B cell (primary cell): ENCODE measurements at regions of chr9 and their contacts with region 1.

Region 1: DNA sequence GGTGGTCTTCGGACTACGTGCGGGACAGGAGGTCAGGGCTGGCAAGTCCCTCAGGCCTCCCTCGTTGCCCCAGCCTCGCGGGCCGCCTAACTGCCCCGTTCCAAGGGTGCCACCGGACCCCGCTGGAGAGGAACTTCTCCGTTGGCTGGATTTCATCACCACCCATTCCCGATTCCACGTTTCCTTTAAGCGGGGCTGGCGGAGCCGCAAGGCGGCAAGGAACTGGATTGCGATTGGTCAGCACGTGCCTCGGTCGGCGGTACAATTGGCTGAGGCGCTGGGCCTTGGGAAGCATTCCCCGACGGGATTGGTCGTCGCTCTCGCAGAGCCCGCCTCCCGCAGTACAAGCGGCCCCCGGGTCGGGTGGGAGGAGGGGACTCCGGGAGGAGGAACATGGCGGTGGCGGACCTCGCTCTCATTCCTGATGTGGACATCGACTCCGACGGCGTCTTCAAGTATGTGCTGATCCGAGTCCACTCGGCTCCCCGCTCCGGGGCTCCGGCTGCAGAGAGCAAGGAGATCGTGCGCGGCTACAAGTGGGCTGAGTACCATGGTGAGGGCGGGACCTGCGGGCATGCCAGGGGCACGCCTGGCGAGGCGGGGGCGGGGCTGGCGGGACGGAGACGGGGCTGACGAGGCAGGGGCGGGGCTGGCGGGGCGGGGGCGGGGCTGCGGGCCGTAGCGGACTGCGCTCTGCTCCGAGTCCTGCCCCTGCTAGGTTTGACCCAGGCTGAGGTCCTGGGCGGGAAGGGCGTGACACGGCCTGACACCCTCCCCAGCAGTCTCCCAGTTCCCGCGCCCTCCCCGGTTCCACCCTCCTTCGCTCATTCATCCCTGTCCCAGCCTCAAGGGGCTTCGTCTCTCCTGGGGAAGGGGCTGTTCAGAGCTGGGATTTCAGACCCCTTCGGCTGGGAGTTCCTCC is at the start of gene PHPT1:
- DNase-seq: peak; percentile 99
- ATAC-seq: peak; percentile 94
- H3K4me3 ChIP-seq: peak within 1 kb of the TSS; percentile 53 to 87 (median 82)
- H3K4me3 Mint-ChIP-seq: peak within 1 kb of the TSS; percentile 96
- H3K27ac ChIP-seq: peak within 1 kb of the TSS in 1 of 2 donors; percentile 55
- H3K27ac Mint-ChIP-seq: peak within 1 kb of the TSS; percentile 94
- H3K4me1 ChIP-seq: peaks cover 33 to 38% of the 10 kb centered on the region in 2 donors
- H3K4me1 Mint-ChIP-seq: peaks cover 20% of the 10 kb centered on the region
- H3K27me3 ChIP-seq: peaks cover 0 to 28% (median 9%) of the 10 kb centered on the region in 4 experiments
- H3K27me3 Mint-ChIP-seq: peaks cover 7% of the 10 kb centered on the region
- CTCF ChIP-seq: no peak
- total RNA-seq, gene PHPT1: 33.1 and 36.5 TPM in 2 replicates

Region 2: DNA sequence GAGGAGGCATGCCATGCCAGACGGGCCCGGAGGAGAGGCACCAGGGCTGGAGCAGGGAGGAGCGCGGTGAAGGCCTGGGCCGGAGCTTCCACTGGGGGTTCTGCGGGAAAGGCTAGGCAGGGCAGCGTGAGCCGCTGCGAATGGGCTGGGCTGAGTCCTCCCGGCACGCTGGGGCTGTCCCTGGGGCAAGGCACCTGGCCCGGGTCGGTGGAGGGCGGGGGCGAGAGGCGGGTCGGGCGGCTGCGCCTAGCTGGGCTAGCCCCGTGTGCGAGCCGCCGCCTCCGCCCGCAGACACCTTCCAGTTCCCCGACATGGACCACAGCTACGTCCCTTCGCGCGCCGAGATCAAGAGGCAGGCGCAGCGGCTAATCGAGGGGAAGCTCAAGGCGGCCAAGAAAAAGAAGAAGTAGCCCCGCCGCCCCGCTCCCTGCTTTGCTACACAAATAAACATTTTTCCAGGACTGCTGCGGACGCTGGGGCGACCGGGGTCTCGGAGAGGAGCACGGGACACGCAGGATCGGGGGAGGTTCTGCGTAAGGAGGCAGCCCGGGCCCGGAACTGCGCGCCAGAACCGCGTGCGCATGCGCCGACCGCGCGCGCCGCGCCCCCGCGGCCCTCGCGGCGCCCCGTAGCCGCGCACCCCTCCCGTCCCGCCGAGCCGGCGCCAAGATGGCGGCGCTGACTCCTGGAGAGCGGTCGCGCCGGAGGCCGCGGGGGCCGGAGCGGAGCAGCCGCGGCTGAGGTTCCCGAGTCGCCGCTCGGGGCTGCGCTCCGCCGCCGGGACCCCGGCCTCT is 41.8 kb before region 1 on chr9 and contains the start of gene RABL6:
- CTCF ChIA-PET with region 1: interaction called, 15 read pairs
- POLR2A ChIA-PET with region 1: no interaction called
- intact Hi-C with region 1: no loop called
- DNase-seq: peak; percentile 93
- ATAC-seq: peak; percentile 86
- H3K4me3 ChIP-seq: peak within 1 kb of the TSS; percentile 42 to 97 (median 76)
- H3K4me3 Mint-ChIP-seq: peak within 1 kb of the TSS; percentile 89
- H3K27ac ChIP-seq: peak within 1 kb of the TSS; percentile 84
- H3K27ac Mint-ChIP-seq: peak within 1 kb of the TSS; percentile 95
- H3K4me1 ChIP-seq: peaks cover 19 to 21% of the 10 kb centered on the region in 2 donors
- H3K4me1 Mint-ChIP-seq: peaks cover 31% of the 10 kb centered on the region
- H3K27me3 ChIP-seq: no peaks in the 10 kb centered on the region
- H3K27me3 Mint-ChIP-seq: no peaks in the 10 kb centered on the region
- CTCF ChIP-seq: no peak
- total RNA-seq, gene RABL6: 70.5 and 72.3 TPM in 2 replicates

Region 3: DNA sequence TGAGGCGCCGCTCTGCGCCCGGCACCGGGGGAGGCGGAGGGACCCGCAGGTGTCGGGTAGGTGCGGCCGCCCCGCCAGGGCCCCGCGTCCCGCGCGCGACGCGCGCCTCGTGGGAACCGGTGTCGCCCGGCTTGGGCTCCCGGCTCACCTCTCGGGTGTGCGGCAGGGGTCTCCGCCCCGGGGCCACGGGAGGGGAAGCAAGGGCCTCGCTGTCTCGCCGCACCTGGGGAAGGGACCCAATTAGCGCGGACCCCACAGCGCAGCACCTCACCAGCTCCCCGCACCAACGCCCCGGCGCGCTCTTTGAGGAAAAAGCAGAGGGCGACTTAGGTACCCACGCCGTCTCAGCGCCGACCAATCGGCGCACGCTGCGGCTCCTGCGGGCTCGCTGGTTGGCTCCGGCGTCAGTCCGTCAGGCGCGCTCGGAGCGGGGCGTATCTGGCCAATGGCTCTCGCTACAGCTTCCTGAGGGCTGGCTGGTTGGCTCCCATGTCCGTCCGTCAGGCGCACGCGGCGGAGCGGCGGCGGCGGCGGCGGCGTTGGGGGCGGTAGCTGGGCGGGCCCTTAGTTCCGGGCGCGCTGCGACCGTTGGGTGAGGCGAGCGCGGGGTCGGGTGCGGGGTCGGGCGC is 36.8 kb after region 1 on chr9 and contains the start of gene TRAF2:
- CTCF ChIA-PET with region 1: interaction called, 11 read pairs
- POLR2A ChIA-PET with region 1: no interaction called
- intact Hi-C with region 1: loop called (anchors 1 kb)
- DNase-seq: peak; percentile 99
- ATAC-seq: peak; percentile 91
- H3K4me3 ChIP-seq: peak within 1 kb of the TSS; percentile 30 to 91 (median 83)
- H3K4me3 Mint-ChIP-seq: peak within 1 kb of the TSS; percentile 91
- H3K27ac ChIP-seq: peak within 1 kb of the TSS; percentile 78 to 99
- H3K27ac Mint-ChIP-seq: peak within 1 kb of the TSS; percentile 87
- H3K4me1 ChIP-seq: peaks cover 28 to 36% of the 10 kb centered on the region in 2 donors
- H3K4me1 Mint-ChIP-seq: peaks cover 34% of the 10 kb centered on the region
- H3K27me3 ChIP-seq: no peaks in the 10 kb centered on the region
- H3K27me3 Mint-ChIP-seq: no peaks in the 10 kb centered on the region
- CTCF ChIP-seq: no peak
- total RNA-seq, gene TRAF2: 54.5 and 55.4 TPM in 2 replicates

Region 4: GRCh38 chr9:136944519-136945279 is 95.4 kb after region 1 on chr9 and contains the starts of genes C8G and FBXW5:
- CTCF ChIA-PET with region 1: interaction called, 3 read pairs
- POLR2A ChIA-PET with region 1: no interaction called
- intact Hi-C with region 1: loop called (anchors 1 kb)
- DNase-seq: peak; percentile 96
- ATAC-seq: peak; percentile 91
- H3K4me3 ChIP-seq: peak within 1 kb of the TSS; percentile 47 to 72 (median 63)
- H3K4me3 Mint-ChIP-seq: peak within 1 kb of the TSS; percentile 80
- H3K27ac ChIP-seq: peak within 1 kb of the TSS in 1 of 2 donors; percentile 48
- H3K27ac Mint-ChIP-seq: peak within 1 kb of the TSS; percentile 87
- H3K4me1 ChIP-seq: peaks cover 11 to 22% of the 10 kb centered on the region in 2 donors
- H3K4me1 Mint-ChIP-seq: peaks cover 12% of the 10 kb centered on the region
- H3K27me3 ChIP-seq: no peaks in the 10 kb centered on the region
- H3K27me3 Mint-ChIP-seq: no peaks in the 10 kb centered on the region
- CTCF ChIP-seq: peak; percentile 90
- total RNA-seq, gene C8G: 1.7 and 2.8 TPM in 2 replicates
- total RNA-seq, gene FBXW5: 99.6 and 102 TPM in 2 replicates